Naive thymus-derived CD8-positive, alpha-beta T cell (primary cell): ENCODE measurements at regions of chr14 and their contacts with region 1.

Region 1: GRCh38 chr14:23301288-23301968 is 1.2 kb downstream of the PPP1R3E start:
- DNase-seq: peak; percentile 95 to 99 (median 97)
- ATAC-seq: peak; percentile 68 to 74
- H3K4me3 Mint-ChIP-seq: peak overlapping the region; percentile 86 to 100 (median 94)
- H3K27ac Mint-ChIP-seq: peak overlapping the region; percentile 84 to 99 (median 95)
- H3K4me1 Mint-ChIP-seq: peaks cover 11 to 39% (median 32%) of the 10 kb centered on the region in 4 donors
- H3K27me3 Mint-ChIP-seq: peaks cover 0 to 13% (median 11%) of the 10 kb centered on the region in 5 donors

Region 2: GRCh38 chr14:23095196-23096108 is 206.0 kb before region 1 on chr14 and contains the start of gene C14orf119:
- POLR2A ChIA-PET with region 1: interaction called, 41 read pairs
- DNase-seq: peak in 9 of 10 donors; percentile 81 to 100 (median 100)
- ATAC-seq: peak; percentile 88
- H3K4me3 Mint-ChIP-seq: no peak within 1 kb of the TSS
- H3K27ac Mint-ChIP-seq: no peak within 1 kb of the TSS
- H3K4me1 Mint-ChIP-seq: peaks cover 24 to 60% (median 34%) of the 10 kb centered on the region in 4 donors
- H3K27me3 Mint-ChIP-seq: no peaks in the 10 kb centered on the region
- polyA plus RNA-seq, gene C14orf119: 62.7 to 122 (median 78.5) TPM

Region 3: DNA sequence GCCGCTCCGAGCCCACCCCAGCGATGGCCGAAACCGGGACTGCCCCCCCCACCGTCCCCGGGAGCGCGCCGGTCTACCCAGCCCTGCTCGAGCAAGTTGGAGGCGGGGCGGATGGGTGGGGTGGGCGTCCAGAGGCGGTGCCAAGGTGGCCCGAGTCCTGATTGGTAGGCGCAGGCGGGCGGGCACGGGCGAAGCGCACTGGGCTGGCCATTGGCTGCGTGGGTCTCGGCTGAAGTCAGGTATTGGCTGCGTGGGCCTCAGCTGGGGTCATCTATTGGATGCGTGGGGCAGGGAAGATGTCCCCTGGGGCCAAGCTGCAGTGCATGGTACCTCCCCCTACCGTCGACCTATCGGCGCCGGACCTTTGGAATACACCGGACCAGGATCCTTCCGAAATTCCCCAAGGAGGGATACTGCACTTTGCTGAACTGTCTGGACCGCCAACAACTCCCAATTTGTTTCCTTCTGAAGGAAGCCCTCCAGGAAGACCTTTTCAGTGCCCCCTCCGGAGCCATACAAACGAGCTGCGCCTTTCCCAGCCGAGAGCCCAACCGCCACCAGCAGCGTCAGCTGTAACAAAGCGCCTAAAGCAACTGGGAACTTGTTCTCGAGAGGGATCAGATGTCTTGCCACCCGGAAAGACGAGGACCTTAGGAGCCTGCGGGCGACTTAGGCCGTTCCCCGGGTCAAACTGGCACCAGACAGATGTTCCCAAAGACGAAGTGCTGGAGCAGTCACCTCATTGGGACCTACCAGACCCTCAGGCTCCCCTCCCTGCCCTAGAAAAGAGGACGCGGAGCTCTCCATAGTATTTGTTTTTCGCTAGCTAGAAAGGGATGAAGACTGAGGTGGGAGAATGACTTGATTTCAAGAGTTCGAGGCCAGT is 15.2 kb before region 1 on chr14 and contains the start of gene HOMEZ:
- POLR2A ChIA-PET with region 1: interaction called, 57 read pairs
- DNase-seq: peak; percentile 91 to 98 (median 96)
- ATAC-seq: peak; percentile 97 to 98
- H3K4me3 Mint-ChIP-seq: peak within 1 kb of the TSS; percentile 90 to 100 (median 98)
- H3K27ac Mint-ChIP-seq: peak within 1 kb of the TSS; percentile 82 to 97 (median 96)
- H3K4me1 Mint-ChIP-seq: peaks cover 6 to 33% (median 32%) of the 10 kb centered on the region in 4 donors
- H3K27me3 Mint-ChIP-seq: no peaks in the 10 kb centered on the region
- polyA plus RNA-seq, gene HOMEZ: 3.9 to 6.1 (median 5.9) TPM

Region 4: DNA sequence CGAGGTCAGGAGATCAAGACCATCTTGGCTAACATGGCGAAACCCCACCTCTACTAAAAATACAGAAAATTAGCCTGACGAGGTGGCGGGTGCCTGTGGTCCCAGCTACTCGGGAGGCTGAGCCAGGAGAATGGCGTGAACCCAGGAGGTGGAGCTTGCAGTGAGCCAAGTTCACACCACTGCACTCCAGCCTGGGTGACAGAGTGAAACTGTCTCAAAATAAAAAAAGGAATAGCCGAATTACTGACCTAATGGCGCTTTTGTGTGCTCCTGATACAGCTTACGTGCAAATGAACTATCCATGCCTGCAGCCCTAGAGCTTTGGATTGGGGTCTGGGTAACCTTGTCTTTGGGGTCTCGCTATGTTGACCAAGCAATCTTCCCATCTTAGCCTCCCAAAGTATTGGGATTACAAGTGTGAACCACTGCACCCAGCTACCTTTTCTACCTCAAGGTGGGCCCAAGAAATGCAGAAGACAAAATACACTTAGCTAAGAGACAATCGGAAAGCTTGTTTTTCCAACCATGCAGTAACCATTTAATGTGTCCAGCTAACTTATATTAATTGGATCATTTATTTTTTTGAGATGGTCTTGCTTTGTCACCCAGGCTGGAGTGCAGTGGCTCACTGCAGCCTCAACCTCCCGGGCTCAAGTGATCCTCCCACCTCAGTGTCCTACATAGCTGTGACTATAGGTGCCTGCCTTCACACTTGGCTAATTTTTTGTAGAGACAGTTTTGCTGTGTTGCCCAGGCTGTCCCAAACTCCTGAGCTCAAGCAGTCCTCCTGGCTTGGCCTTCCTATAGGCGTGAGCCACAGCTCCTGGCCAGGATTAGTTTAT is 25.3 kb after region 1 on chr14:
- POLR2A ChIA-PET with region 1: interaction called, 376 read pairs
- DNase-seq: no peak
- ATAC-seq: no peak
- H3K4me3 Mint-ChIP-seq: no peak overlapping the region
- H3K27ac Mint-ChIP-seq: peak overlapping the region in 6 of 10 donors; percentile 19 to 69 (median 54)
- H3K4me1 Mint-ChIP-seq: peaks cover 16 to 22% (median 18%) of the 10 kb centered on the region in 4 donors
- H3K27me3 Mint-ChIP-seq: no peaks in the 10 kb centered on the region